RWPE1 (cell line): ENCODE measurements at regions of chr15 and their contacts with region 1.

Region 1: GRCh38 chr15:38440353-38441129 is 13.4 kb upstream of the FAM98B start:
- DNase-seq: peak; percentile 57
- H3K27ac ChIP-seq: no peak overlapping the region
- CTCF ChIP-seq: peak; percentile 98

Region 2: DNA sequence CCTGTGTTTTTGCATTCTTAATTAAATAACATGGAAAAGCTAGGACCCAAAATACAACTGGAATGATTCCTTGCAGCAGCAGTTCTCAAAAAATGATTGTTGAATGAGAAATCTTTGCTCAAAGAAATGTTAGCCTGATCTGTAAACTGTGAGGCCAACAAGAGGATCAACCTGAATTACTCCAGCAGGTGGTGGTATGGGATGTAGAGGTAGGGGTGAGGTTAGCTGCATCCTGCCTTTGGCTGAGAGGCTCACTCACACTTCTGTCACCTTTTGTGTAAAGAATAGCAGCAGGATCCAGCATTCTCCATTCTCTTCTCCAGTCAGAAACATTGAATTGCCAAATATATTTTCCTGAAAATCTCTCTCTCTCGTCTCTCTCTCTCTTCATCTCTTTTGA is 13.2 kb before region 1 on chr15:
- CTCF ChIA-PET with region 1: no interaction called
- POLR2A ChIA-PET with region 1: no interaction called
- DNase-seq: no peak
- H3K27ac ChIP-seq: no peak overlapping the region
- CTCF ChIP-seq: no peak

Region 3: GRCh38 chr15:38453971-38454695 is 13.6 kb after region 1 on chr15 and contains the start of gene FAM98B:
- CTCF ChIA-PET with region 1: interaction called, 12 read pairs
- POLR2A ChIA-PET with region 1: interaction called, 3 read pairs
- DNase-seq: peak; percentile 83
- H3K27ac ChIP-seq: peak within 1 kb of the TSS; percentile 94
- CTCF ChIP-seq: peak; percentile 44

Region 4: DNA sequence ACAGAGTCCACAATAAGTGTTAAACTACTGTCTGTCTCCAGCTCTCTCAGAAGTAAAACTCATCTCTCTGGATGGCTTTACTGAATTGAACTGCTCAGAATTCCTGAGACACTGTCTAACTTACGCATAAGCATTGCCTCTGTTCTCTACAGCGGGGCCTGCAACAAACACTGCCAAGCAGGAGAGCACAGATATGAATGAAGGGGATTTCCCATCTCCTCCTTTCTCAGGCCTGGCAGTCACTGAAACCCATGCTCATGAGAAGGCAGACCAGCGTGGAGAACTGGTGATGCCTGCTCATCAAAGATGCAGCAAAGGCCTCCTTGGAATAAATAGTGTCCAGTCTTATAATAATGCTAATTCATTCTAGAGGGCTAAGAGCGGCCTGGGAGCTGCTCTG is 113.8 kb after region 1 on chr15:
- CTCF ChIA-PET with region 1: no interaction called
- POLR2A ChIA-PET with region 1: no interaction called
- DNase-seq: no peak
- H3K27ac ChIP-seq: no peak overlapping the region
- CTCF ChIP-seq: no peak

Region 5: GRCh38 chr15:38683382-38684242 is 243.1 kb after region 1 on chr15:
- CTCF ChIA-PET with region 1: interaction called, 12 read pairs
- POLR2A ChIA-PET with region 1: no interaction called
- DNase-seq: peak; percentile 50
- H3K27ac ChIP-seq: no peak overlapping the region
- CTCF ChIP-seq: peak; percentile 86